Dorsolateral prefrontal cortex (tissue), 120 donors: ENCODE measurements at regions of chr3 and their contacts with region 1.

Region 1: GRCh38 chr3:33798411-33799201 is at the start of gene PDCD6IP:
- DNase-seq: peak; percentile 86 to 94 (median 90)
- H3K4me3 ChIP-seq: peak within 1 kb of the TSS; percentile 64 to 99 (median 92)
- H3K27ac ChIP-seq: peak within 1 kb of the TSS; percentile 13 to 95 (median 85)
- H3K27me3 ChIP-seq: no peaks in the 10 kb centered on the region
- CTCF ChIP-seq: peak in 47 of 56 donors; percentile 3 to 62 (median 39)
- total RNA-seq, gene PDCD6IP: 129 to 240 (median 172) TPM

Region 2: GRCh38 chr3:33113772-33114621 is 684.6 kb before region 1 on chr3 and contains the start of gene CRTAP:
- intact Hi-C with region 1: loop called in 1 of 2 experiments (anchors 10 kb)
- DNase-seq: peak; percentile 82 to 94 (median 90)
- H3K4me3 ChIP-seq: peak within 1 kb of the TSS; percentile 56 to 91 (median 80)
- H3K27ac ChIP-seq: peak within 1 kb of the TSS; percentile 73 to 99 (median 95)
- H3K27me3 ChIP-seq: no peaks in the 10 kb centered on the region
- CTCF ChIP-seq: peak in 18 of 56 donors; percentile 6 to 33 (median 18)
- total RNA-seq, gene CRTAP: 49.8 to 139 (median 75.7) TPM

Region 3: DNA sequence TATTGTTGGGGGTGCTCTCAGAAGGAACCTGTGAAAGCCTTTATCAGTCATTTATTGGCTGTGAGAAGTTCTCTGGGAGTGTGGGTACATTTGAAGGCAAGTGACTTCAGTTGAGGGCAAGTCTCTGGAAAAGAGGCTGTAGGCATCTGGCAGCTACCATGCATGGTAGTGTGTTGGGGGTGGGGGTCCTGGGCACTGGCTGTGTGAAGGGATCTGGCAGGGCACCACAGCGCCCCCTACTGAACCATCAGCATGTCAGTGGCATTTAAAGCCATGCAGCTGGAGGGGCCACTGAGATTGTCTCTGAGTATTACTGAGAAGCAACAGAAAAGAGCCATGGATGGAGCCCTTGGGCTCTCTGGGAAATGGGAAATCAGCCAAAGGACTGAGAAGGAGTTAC is 654.2 kb before region 1 on chr3:
- intact Hi-C with region 1: loop called in 1 of 2 experiments (anchors 10 kb)
- DNase-seq: no peak
- H3K4me3 ChIP-seq: no peak overlapping the region
- H3K27ac ChIP-seq: peak overlapping the region in 6 of 59 donors; percentile 4 to 97 (median 88)
- H3K27me3 ChIP-seq: no peaks in the 10 kb centered on the region
- CTCF ChIP-seq: peak in 19 of 56 donors; percentile 8 to 31 (median 16)

Region 4: GRCh38 chr3:33440323-33441232 is 358.0 kb before region 1 on chr3 and contains the start of gene UBP1:
- intact Hi-C with region 1: loop called (anchors 2 to 5 kb)
- DNase-seq: peak; percentile 97 to 100 (median 99)
- H3K4me3 ChIP-seq: peak within 1 kb of the TSS; percentile 54 to 100 (median 88)
- H3K27ac ChIP-seq: peak within 1 kb of the TSS; percentile 85 to 100 (median 96)
- H3K27me3 ChIP-seq: no peaks in the 10 kb centered on the region
- CTCF ChIP-seq: peak in 21 of 56 donors; percentile 5 to 44 (median 18)
- total RNA-seq, gene UBP1: 32.8 to 113 (median 70.5) TPM

Region 5: GRCh38 chr3:33490641-33491241 is 307.9 kb before region 1 on chr3:
- intact Hi-C with region 1: no loop called
- DNase-seq: no peak
- H3K4me3 ChIP-seq: no peak overlapping the region
- H3K27ac ChIP-seq: no peak overlapping the region
- H3K27me3 ChIP-seq: no peaks in the 10 kb centered on the region
- CTCF ChIP-seq: no peak

Region 6: DNA sequence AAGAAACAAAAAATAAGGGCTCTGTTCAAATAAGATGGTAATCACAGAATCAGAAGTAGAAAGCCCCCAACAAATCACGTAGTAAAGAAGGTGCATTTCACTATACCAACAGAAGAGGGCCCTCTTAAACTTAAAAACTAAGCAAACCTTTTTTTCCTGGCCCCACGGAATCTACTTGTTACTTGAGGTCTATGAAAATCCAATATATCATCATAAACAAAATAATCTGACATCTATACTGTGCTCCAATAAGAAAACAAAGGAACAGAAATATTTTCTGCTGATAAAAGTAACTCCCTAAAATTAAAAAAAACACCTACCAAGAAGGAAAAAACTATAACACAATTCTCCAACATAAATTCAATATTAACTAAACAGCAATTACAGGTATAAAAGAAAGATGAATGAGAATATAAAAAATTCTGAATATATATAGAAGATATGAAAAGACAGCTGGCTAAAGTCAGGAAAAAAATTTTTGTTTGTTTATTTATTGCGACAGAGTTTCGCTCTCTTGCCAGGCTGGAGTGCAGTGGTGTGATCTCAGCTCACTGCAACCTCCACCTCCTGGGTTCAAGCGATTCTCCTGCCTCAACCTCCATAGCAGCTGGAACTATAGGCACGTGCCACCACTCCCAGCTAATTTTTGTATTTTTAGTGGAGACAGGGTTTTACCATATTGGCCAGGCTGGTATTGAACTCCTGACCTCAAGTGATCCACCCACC is 162.3 kb before region 1 on chr3:
- intact Hi-C with region 1: loop called in 1 of 2 experiments (anchors 10 kb)
- DNase-seq: no peak
- H3K4me3 ChIP-seq: peak overlapping the region in 8 of 59 donors; percentile 1 to 20 (median 7)
- H3K27ac ChIP-seq: peak overlapping the region in 41 of 59 donors; percentile 7 to 76 (median 50)
- H3K27me3 ChIP-seq: no peaks in the 10 kb centered on the region
- CTCF ChIP-seq: peak; percentile 59 to 90 (median 74)

Region 7: DNA sequence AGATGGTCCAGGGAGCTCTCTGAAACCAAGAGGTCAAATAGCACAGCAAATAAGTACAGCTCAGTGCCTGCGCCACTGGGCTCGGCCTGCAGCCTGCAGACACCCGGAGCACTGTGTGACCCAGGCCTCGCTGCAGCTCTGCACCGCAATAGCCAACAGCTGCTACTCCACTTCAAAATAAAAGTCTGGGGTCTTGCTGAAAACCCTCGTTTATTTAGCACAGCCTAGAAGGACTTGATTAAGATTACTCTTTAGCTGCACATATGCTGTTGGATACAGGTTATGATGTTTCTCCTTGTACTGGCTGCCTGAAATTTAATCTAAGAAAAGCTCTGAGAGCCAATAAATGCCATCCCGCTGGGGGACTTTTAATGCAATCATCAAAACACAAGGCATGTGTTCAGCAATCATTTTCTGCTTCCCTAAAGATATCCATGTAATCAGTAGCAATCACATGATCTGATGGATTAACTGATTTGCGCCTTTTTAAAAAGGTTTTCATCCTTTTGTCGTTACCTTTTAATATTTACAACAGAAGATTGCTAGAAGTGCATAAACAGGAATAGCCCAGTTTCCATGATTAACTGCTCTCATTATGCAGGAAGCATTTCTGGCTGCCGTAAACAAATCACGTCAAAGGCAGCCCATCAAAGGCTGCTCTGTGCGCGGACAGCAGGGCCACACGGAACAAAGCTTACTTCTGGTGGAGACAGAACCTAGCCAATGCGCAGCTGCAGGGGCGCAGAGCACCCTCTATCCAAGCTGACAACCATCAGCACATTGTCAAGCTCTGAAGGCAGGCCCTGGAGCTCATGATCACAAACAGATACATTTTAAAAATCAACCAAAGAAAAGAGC is 139.4 kb before region 1 on chr3:
- intact Hi-C with region 1: loop called in 1 of 2 experiments (anchors 1 kb)
- DNase-seq: peak; percentile 85 to 97 (median 94)
- H3K4me3 ChIP-seq: peak overlapping the region; percentile 37 to 90 (median 77)
- H3K27ac ChIP-seq: peak overlapping the region; percentile 67 to 100 (median 98)
- H3K27me3 ChIP-seq: no peaks in the 10 kb centered on the region
- CTCF ChIP-seq: peak in 33 of 56 donors; percentile 6 to 34 (median 19)

Region 8: DNA sequence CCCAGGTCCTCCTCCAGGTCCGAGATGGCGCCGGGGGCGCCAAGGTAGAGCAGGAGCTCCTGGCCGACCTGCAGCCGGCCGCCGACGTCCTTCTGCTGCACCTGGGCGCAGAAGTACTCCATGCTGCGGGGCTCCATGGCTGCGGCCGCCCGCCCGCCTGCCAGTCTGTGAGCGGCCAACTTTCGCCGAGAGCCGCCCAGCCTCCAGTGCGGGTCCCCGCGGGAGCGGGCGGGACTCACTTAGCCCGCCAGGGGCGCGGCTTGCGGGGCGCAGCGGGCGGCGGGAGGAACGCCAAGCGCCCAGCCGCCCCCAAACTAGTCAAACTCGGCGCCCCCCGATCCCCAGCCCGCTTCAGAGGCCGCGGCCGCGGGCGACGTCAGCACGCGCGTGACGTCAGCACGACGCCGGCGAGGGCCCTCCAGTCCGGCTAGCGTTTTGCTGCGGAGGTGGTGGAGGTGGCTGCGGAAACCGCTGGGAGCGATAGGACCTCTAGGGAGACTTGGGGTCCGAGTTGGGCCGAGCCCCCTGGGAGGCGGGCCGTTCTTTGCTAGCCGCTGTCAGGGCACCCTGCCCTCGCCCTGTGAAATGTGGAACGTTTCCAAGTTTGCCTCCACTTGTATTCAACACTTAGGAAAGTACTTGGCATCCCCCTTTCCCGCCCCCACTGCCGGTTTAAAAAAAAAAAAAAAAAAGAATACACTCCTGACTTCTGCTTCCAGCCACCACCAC is 80.6 kb before region 1 on chr3 and contains the start of gene CLASP2:
- intact Hi-C with region 1: loop called in 1 of 2 experiments (anchors 5 kb)
- DNase-seq: peak; percentile 62 to 92 (median 78)
- H3K4me3 ChIP-seq: peak within 1 kb of the TSS; percentile 58 to 98 (median 89)
- H3K27ac ChIP-seq: peak within 1 kb of the TSS in 58 of 59 donors; percentile 36 to 96 (median 86)
- H3K27me3 ChIP-seq: no peaks in the 10 kb centered on the region
- CTCF ChIP-seq: peak in 21 of 56 donors; percentile 1 to 40 (median 21)
- total RNA-seq, gene CLASP2: 160 to 469 (median 336) TPM